ENCODE measurements at regions of chr2 and their contacts with region 1.

Region 1: GRCh38 chr2:167127135-167127534 is 238.9 kb downstream of the XIRP2 start:
- DNase-seq: peak; percentile 40
- H3K4me3 ChIP-seq: no peak overlapping the region
- H3K27ac ChIP-seq: no peak overlapping the region
- H3K4me1 ChIP-seq: no peaks in the 10 kb centered on the region
- H3K27me3 ChIP-seq: no peaks in the 10 kb centered on the region
- CTCF ChIP-seq: peak; percentile 45

Region 2: GRCh38 chr2:166758956-166759355 is 368.2 kb before region 1 on chr2:
- CTCF ChIA-PET with region 1: interaction called, 11 read pairs
- POLR2A ChIA-PET with region 1: no interaction called
- intact Hi-C with region 1: no loop called
- DNase-seq: peak; percentile 54
- H3K4me3 ChIP-seq: no peak overlapping the region
- H3K27ac ChIP-seq: peak overlapping the region; percentile 70
- H3K4me1 ChIP-seq: no peaks in the 10 kb centered on the region
- H3K27me3 ChIP-seq: no peaks in the 10 kb centered on the region
- CTCF ChIP-seq: no peak

Measured in A673 (cell line).